CD4-positive, alpha-beta memory T cell (primary cell): ENCODE measurements at regions of chr17 and their contacts with region 1.

Region 1: GRCh38 chr17:59914274-59914854 is 21.4 kb downstream of the RPS6KB1 start:
- DNase-seq: peak in 4 of 5 donors; percentile 47 to 56 (median 50)
- H3K4me3 ChIP-seq: no peak overlapping the region
- H3K4me3 Mint-ChIP-seq: no peak overlapping the region
- H3K27ac ChIP-seq: no peak overlapping the region
- H3K27ac Mint-ChIP-seq: no peak overlapping the region
- H3K4me1 ChIP-seq: no peaks in the 10 kb centered on the region
- H3K4me1 Mint-ChIP-seq: peaks cover 0 to 3% (median 2%) of the 10 kb centered on the region in 4 donors
- H3K27me3 ChIP-seq: no peaks in the 10 kb centered on the region
- H3K27me3 Mint-ChIP-seq: no peaks in the 10 kb centered on the region

Region 2: DNA sequence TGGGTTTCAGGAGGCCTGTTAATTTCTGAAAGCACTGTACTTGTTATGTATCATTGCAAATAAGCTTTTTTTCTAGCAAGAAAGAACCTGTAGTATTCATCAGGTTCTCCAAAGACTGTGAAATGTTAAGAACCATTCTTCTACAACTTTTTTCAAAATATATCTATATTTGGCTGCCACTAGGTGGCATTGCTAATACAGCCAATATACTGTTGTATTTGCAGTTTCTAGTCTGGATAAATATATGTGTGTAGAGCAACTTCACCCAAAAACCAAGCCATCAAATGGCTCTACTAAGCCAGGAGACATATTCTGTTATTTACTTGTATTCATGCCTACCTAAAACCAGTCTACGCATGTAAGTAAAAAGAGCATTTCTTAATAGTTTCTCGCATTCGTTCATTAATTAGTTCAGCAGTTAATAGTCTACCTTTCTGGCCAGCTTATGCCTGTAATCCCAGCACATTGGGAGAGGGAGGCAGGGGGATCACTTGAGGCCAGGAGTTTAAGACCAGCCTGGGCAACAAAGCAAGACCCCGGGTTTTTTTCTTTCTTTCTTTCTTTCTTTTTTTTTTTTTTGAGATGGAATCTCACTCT is 167.4 kb before region 1 on chr17:
- CTCF ChIA-PET with region 1: interaction called, 13 read pairs
- POLR2A ChIA-PET with region 1: no interaction called
- intact Hi-C with region 1: loop called (anchors 2 kb)
- DNase-seq: peak in 4 of 5 donors; percentile 33 to 38 (median 36)
- H3K4me3 ChIP-seq: no peak overlapping the region
- H3K4me3 Mint-ChIP-seq: no peak overlapping the region
- H3K27ac ChIP-seq: no peak overlapping the region
- H3K27ac Mint-ChIP-seq: no peak overlapping the region
- H3K4me1 ChIP-seq: peaks cover 4% of the 10 kb centered on the region
- H3K4me1 Mint-ChIP-seq: peaks cover 3 to 8% (median 3%) of the 10 kb centered on the region in 4 donors
- H3K27me3 ChIP-seq: no peaks in the 10 kb centered on the region
- H3K27me3 Mint-ChIP-seq: no peaks in the 10 kb centered on the region

Region 3: GRCh38 chr17:59903455-59903854 is 10.9 kb before region 1 on chr17:
- CTCF ChIA-PET with region 1: interaction called, 10 read pairs
- POLR2A ChIA-PET with region 1: no interaction called
- intact Hi-C with region 1: no loop called
- DNase-seq: no peak
- H3K4me3 ChIP-seq: no peak overlapping the region
- H3K4me3 Mint-ChIP-seq: peak overlapping the region in 1 of 8 donors; percentile 18
- H3K27ac ChIP-seq: no peak overlapping the region
- H3K27ac Mint-ChIP-seq: peak overlapping the region in 5 of 7 donors; percentile 17 to 48 (median 26)
- H3K4me1 ChIP-seq: peaks cover 25% of the 10 kb centered on the region
- H3K4me1 Mint-ChIP-seq: peaks cover 16 to 42% (median 19%) of the 10 kb centered on the region in 4 donors
- H3K27me3 ChIP-seq: no peaks in the 10 kb centered on the region
- H3K27me3 Mint-ChIP-seq: no peaks in the 10 kb centered on the region

Region 4: GRCh38 chr17:59964482-59965328 is 50.3 kb after region 1 on chr17 and contains the start of gene RNFT1:
- CTCF ChIA-PET with region 1: interaction called, 10 read pairs
- POLR2A ChIA-PET with region 1: interaction called, 6 read pairs
- intact Hi-C with region 1: no loop called
- DNase-seq: peak; percentile 85 to 87 (median 87)
- H3K4me3 ChIP-seq: peak within 1 kb of the TSS; percentile 80 to 90
- H3K4me3 Mint-ChIP-seq: peak within 1 kb of the TSS; percentile 93 to 98 (median 94)
- H3K27ac ChIP-seq: peak within 1 kb of the TSS; percentile 83
- H3K27ac Mint-ChIP-seq: peak within 1 kb of the TSS; percentile 90 to 99 (median 99)
- H3K4me1 ChIP-seq: peaks cover 25% of the 10 kb centered on the region
- H3K4me1 Mint-ChIP-seq: peaks cover 12 to 26% (median 18%) of the 10 kb centered on the region in 4 donors
- H3K27me3 ChIP-seq: no peaks in the 10 kb centered on the region
- H3K27me3 Mint-ChIP-seq: no peaks in the 10 kb centered on the region
- total RNA-seq, gene RNFT1: 36.6 to 40.3 TPM

Region 5: GRCh38 chr17:60036796-60037612 is 122.6 kb after region 1 on chr17:
- CTCF ChIA-PET with region 1: interaction called, 15 read pairs
- POLR2A ChIA-PET with region 1: no interaction called
- intact Hi-C with region 1: loop called (anchors 5 kb)
- DNase-seq: peak; percentile 63 to 69 (median 67)
- H3K4me3 ChIP-seq: no peak overlapping the region
- H3K4me3 Mint-ChIP-seq: no peak overlapping the region
- H3K27ac ChIP-seq: no peak overlapping the region
- H3K27ac Mint-ChIP-seq: peak overlapping the region in 2 of 7 donors; percentile 13 to 53
- H3K4me1 ChIP-seq: no peaks in the 10 kb centered on the region
- H3K4me1 Mint-ChIP-seq: peaks cover 5% of the 10 kb centered on the region in 4 donors
- H3K27me3 ChIP-seq: peaks cover 4% of the 10 kb centered on the region
- H3K27me3 Mint-ChIP-seq: peaks cover 10 to 12% of the 10 kb centered on the region in 2 donors

Region 6: DNA sequence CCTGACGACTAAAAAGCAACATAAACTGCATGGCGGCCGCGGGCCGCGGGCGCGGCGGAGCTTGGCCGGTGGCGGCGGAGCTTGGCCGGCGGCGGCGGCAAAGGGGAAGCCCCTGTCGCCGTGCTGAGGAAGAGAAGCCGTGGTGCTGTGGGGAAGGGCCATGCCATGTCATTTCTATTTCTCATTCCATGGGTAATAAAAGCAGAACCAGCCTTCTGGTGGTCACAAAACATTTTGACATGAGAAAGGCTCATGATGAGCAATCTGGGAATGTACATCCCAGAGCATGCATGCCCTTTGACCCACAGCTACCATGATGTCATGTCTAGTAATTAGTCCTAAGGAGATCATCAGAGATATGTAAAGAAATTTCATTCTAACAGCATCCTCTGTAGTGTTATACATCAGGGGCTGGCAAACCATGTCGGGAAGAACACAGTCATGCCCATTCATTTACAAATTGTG is 188.3 kb after region 1 on chr17:
- CTCF ChIA-PET with region 1: no interaction called
- POLR2A ChIA-PET with region 1: no interaction called
- intact Hi-C with region 1: loop called (anchors 10 kb)
- DNase-seq: peak in 3 of 5 donors; percentile 3 to 19 (median 18)
- H3K4me3 ChIP-seq: no peak overlapping the region
- H3K4me3 Mint-ChIP-seq: peak overlapping the region; percentile 39 to 82 (median 76)
- H3K27ac ChIP-seq: no peak overlapping the region
- H3K27ac Mint-ChIP-seq: no peak overlapping the region
- H3K4me1 ChIP-seq: peaks cover 3% of the 10 kb centered on the region
- H3K4me1 Mint-ChIP-seq: peaks cover 4 to 10% (median 8%) of the 10 kb centered on the region in 4 donors
- H3K27me3 ChIP-seq: no peaks in the 10 kb centered on the region
- H3K27me3 Mint-ChIP-seq: peaks cover 18 to 31% of the 10 kb centered on the region in 2 donors